ENCODE measurements at regions of chr6 and their contacts with region 1.

Region 1: GRCh38 chr6:70667711-70668498 is at the start of gene SMAP1:
- DNase-seq: peak; percentile 88 to 93 (median 89)
- H3K4me3 ChIP-seq: peak within 1 kb of the TSS; percentile 55 to 66
- H3K4me3 Mint-ChIP-seq: peak within 1 kb of the TSS; percentile 85 to 95 (median 90)
- H3K27ac ChIP-seq: peak within 1 kb of the TSS; percentile 82
- H3K27ac Mint-ChIP-seq: peak within 1 kb of the TSS; percentile 86 to 94 (median 92)
- H3K4me1 ChIP-seq: peaks cover 56% of the 10 kb centered on the region
- H3K4me1 Mint-ChIP-seq: peaks cover 47 to 60% (median 53%) of the 10 kb centered on the region in 4 donors
- H3K27me3 ChIP-seq: no peaks in the 10 kb centered on the region
- H3K27me3 Mint-ChIP-seq: peaks cover 0 to 1% of the 10 kb centered on the region in 2 donors
- total RNA-seq, gene SMAP1: 25.5 to 29.7 TPM

Region 2: GRCh38 chr6:69813508-69813907 is 854.4 kb before region 1 on chr6:
- CTCF ChIA-PET with region 1: no interaction called
- POLR2A ChIA-PET with region 1: no interaction called
- intact Hi-C with region 1: loop called (anchors 10 kb)
- DNase-seq: no peak
- H3K4me3 ChIP-seq: no peak overlapping the region
- H3K4me3 Mint-ChIP-seq: peak overlapping the region in 7 of 8 donors; percentile 30 to 83 (median 59)
- H3K27ac ChIP-seq: peak overlapping the region; percentile 47
- H3K27ac Mint-ChIP-seq: peak overlapping the region; percentile 84 to 99 (median 90)
- H3K4me1 ChIP-seq: peaks cover 55% of the 10 kb centered on the region
- H3K4me1 Mint-ChIP-seq: peaks cover 40 to 68% (median 55%) of the 10 kb centered on the region in 4 donors
- H3K27me3 ChIP-seq: no peaks in the 10 kb centered on the region
- H3K27me3 Mint-ChIP-seq: no peaks in the 10 kb centered on the region

Region 3: DNA sequence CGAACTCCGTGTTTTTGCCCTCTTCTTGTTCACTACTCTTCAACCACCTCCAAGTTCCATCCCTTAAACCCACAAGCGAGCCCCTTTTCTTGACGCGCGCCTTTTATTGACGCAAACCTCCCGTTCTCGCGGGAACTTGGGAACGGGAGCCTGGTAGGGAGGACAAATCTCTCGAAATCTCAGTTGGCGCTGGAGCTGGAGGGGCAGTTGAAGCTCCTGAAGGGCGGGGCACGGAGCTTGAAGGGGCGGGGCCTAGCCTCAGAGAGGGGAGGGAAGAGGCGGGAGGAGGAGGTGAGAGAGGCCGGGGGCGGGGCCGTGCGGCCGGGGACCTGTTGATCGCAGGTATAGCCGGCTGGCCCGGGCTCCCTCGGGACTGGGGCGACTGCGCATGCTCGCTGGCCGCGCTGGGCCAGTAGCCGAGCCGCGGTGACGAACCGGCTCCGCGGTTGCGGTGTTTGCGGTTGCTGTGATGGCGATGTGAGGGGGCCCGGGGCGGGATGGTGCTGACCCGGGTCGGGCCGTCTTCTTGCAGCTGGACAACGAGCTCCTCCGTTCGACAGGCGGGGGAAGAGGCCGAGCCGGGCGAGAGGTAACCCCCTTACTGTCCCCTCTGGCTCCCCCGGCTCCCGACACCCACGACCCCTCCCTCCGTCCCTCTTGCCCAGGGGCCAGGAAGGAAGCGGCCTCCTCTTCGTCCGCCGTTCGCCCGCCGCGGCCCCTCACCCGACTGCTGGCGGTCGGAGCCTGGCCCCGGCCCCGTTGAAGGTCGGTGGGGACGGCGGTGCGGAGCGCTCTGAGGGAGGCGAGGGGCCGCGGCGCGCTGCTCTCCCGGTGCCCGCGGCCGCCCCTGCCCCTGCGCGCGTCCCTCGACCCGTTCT is 254.6 kb before region 1 on chr6 and contains the start of gene FAM135A:
- CTCF ChIA-PET with region 1: interaction called, 5 read pairs
- POLR2A ChIA-PET with region 1: interaction called, 17 read pairs
- intact Hi-C with region 1: loop called (anchors 1 kb)
- DNase-seq: peak; percentile 90 to 96 (median 93)
- H3K4me3 ChIP-seq: peak within 1 kb of the TSS; percentile 59 to 62
- H3K4me3 Mint-ChIP-seq: peak within 1 kb of the TSS; percentile 93 to 97 (median 95)
- H3K27ac ChIP-seq: peak within 1 kb of the TSS; percentile 56
- H3K27ac Mint-ChIP-seq: peak within 1 kb of the TSS; percentile 90 to 96 (median 92)
- H3K4me1 ChIP-seq: peaks cover 17% of the 10 kb centered on the region
- H3K4me1 Mint-ChIP-seq: peaks cover 13 to 26% (median 20%) of the 10 kb centered on the region in 4 donors
- H3K27me3 ChIP-seq: no peaks in the 10 kb centered on the region
- H3K27me3 Mint-ChIP-seq: peaks cover 0 to 2% of the 10 kb centered on the region in 2 donors
- total RNA-seq, gene FAM135A: 11.3 to 14.5 TPM

Region 4: DNA sequence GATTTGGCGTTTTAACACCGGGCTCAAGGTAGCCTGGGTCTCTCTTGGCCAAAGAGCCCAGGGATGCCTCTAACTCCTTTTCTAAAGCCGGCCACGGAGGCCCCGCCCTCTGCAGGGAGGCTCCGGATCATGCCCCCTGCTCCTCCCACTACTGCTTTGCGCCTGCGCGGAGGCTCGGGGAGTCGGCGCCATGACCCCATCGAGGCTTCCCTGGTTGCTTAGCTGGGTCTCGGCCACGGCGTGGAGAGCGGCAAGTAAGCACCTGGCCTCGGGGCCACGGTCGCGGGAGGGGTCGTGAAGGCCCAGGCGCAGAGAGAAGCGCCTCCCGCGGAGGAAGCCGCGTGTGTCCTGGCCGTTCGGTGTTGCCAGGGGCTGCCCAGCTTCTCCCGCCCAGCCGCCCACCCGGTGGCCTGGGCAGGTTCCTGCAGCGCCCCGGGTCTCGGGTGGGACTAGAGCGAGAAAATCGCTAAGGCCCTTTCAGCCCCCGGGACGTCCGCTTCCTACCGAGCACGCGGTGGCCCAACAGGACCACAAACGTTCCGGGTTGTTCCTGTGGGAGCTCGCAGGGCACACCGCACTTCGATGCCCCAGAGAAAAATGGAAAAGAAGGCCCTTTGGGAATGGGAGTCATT is 101.0 kb before region 1 on chr6 and contains the start of gene SDHAF4:
- CTCF ChIA-PET with region 1: interaction called, 6 read pairs
- POLR2A ChIA-PET with region 1: interaction called, 16 read pairs
- intact Hi-C with region 1: loop called (anchors 1 kb)
- DNase-seq: peak; percentile 93 to 95 (median 94)
- H3K4me3 ChIP-seq: peak within 1 kb of the TSS; percentile 77 to 85
- H3K4me3 Mint-ChIP-seq: peak within 1 kb of the TSS; percentile 83 to 93 (median 91)
- H3K27ac ChIP-seq: peak within 1 kb of the TSS; percentile 81
- H3K27ac Mint-ChIP-seq: peak within 1 kb of the TSS; percentile 41 to 95 (median 92)
- H3K4me1 ChIP-seq: peaks cover 19% of the 10 kb centered on the region
- H3K4me1 Mint-ChIP-seq: peaks cover 13 to 25% (median 19%) of the 10 kb centered on the region in 4 donors
- H3K27me3 ChIP-seq: no peaks in the 10 kb centered on the region
- H3K27me3 Mint-ChIP-seq: no peaks in the 10 kb centered on the region
- total RNA-seq, gene SDHAF4: 12.3 to 13.8 TPM

Region 5: DNA sequence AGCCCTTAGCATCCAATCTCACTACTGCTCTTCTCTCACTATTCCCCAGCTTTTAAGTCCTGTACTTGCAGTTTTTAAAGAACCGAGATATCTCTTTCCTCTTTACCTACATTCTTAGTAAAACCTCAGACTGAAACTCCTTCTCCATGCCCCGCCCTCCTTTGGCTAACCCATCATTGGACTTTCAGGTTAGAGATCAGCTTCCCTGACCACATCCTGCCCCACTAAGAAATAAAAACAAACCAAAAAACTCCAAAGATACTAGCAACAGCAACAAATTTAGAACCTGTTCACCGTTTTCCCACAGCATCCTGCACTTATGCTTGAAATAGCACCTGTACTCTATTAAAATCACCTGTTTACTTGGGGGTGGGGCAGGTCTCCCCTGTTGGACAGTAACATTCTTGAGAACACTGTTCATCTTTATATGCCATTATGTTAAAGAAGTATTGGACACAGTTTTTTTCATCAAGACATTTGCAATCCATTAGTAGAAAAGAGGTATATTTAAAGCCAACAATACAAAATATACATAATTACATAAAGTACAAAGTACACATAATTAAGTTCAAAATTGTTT is 16.5 kb before region 1 on chr6:
- CTCF ChIA-PET with region 1: interaction called, 5 read pairs
- POLR2A ChIA-PET with region 1: interaction called, 50 read pairs
- intact Hi-C with region 1: loop called (anchors 1 kb)
- DNase-seq: peak; percentile 68 to 79 (median 74)
- H3K4me3 ChIP-seq: peak overlapping the region in 1 of 2 donors; percentile 21
- H3K4me3 Mint-ChIP-seq: peak overlapping the region; percentile 66 to 86 (median 80)
- H3K27ac ChIP-seq: peak overlapping the region; percentile 39
- H3K27ac Mint-ChIP-seq: peak overlapping the region; percentile 68 to 93 (median 87)
- H3K4me1 ChIP-seq: peaks cover 34% of the 10 kb centered on the region
- H3K4me1 Mint-ChIP-seq: peaks cover 21 to 46% (median 31%) of the 10 kb centered on the region in 4 donors
- H3K27me3 ChIP-seq: no peaks in the 10 kb centered on the region
- H3K27me3 Mint-ChIP-seq: no peaks in the 10 kb centered on the region

Region 6: GRCh38 chr6:71321314-71321713 is 653.4 kb after region 1 on chr6:
- CTCF ChIA-PET with region 1: no interaction called
- POLR2A ChIA-PET with region 1: no interaction called
- intact Hi-C with region 1: no loop called
- DNase-seq: no peak
- H3K4me3 ChIP-seq: no peak overlapping the region
- H3K4me3 Mint-ChIP-seq: no peak overlapping the region
- H3K27ac ChIP-seq: no peak overlapping the region
- H3K27ac Mint-ChIP-seq: no peak overlapping the region
- H3K4me1 ChIP-seq: no peaks in the 10 kb centered on the region
- H3K4me1 Mint-ChIP-seq: no peaks in the 10 kb centered on the region
- H3K27me3 ChIP-seq: no peaks in the 10 kb centered on the region
- H3K27me3 Mint-ChIP-seq: peaks cover 0 to 4% of the 10 kb centered on the region in 2 donors

Region 7: DNA sequence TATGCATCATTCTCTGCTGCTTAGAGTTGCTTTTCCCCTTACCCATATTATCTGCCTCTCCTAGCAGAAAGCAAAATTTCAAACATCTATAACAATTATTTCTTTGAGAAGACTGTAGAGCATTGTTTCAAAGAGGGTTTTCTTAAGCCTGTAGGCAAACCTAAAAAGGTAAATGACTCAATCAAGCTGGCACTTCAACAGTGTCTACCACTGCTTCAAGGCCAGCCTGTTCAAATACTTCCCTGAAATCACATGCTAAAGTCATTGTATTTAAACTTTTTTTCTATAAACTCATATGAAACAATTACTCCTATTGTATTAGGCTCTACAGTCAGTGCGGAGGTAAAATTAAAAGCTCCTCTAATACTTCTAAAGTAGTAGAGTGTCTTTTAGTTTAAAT is 707.8 kb after region 1 on chr6:
- CTCF ChIA-PET with region 1: no interaction called
- POLR2A ChIA-PET with region 1: no interaction called
- intact Hi-C with region 1: no loop called
- DNase-seq: no peak
- H3K4me3 ChIP-seq: no peak overlapping the region
- H3K4me3 Mint-ChIP-seq: no peak overlapping the region
- H3K27ac ChIP-seq: no peak overlapping the region
- H3K27ac Mint-ChIP-seq: no peak overlapping the region
- H3K4me1 ChIP-seq: no peaks in the 10 kb centered on the region
- H3K4me1 Mint-ChIP-seq: no peaks in the 10 kb centered on the region
- H3K27me3 ChIP-seq: no peaks in the 10 kb centered on the region
- H3K27me3 Mint-ChIP-seq: peaks cover 3 to 5% of the 10 kb centered on the region in 2 donors

Measured in CD4-positive, alpha-beta memory T cell (primary cell).